ENCODE measurements at regions of chr1 and their contacts with region 1.

Region 1: GRCh38 chr1:26035959-26036755 is 9.8 kb downstream of the SLC30A2 start:
- DNase-seq: no peak
- H3K4me3 ChIP-seq: peak overlapping the region; percentile 79
- CTCF ChIP-seq: peak; percentile 97

Region 2: GRCh38 chr1:25523542-25523941 is 512.6 kb before region 1 on chr1:
- CTCF ChIA-PET with region 1: no interaction called
- POLR2A ChIA-PET with region 1: no interaction called
- DNase-seq: no peak
- H3K4me3 ChIP-seq: no peak overlapping the region
- CTCF ChIP-seq: no peak

Region 3: GRCh38 chr1:25631750-25632485 is 404.2 kb before region 1 on chr1:
- CTCF ChIA-PET with region 1: no interaction called
- POLR2A ChIA-PET with region 1: no interaction called
- DNase-seq: no peak
- H3K4me3 ChIP-seq: no peak overlapping the region
- CTCF ChIP-seq: no peak

Region 4: DNA sequence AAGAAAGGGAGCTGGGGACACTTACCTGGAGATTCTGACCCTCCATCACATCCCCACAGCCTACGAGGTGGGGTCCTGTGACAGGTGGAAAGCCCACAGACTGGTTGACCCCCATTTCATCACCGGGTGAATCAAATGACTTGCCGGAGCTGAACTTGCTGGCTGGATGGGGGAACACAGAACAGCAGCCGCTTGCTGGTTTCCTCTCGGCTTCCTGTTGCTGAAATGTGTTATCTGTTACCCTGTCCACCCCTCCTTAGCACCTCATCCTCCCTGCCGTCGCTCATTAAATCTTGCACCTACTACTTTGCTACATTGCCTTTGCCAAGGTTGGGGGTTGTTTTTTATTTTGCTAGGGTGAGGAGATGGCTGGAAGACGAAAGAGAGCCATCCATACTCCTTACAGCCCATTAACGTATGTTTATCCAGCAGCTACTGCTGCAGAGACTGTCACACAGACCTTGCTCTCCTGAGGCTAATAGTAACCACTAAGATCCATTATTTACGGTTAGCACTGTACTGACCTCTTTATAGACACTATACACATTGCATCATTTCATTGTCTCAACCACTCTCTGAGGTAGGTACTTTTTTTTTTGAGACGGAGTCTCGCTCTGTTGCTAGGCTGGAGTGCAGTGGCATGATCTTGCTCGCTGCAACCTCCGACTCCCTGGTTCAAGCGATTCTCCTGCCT is 45.3 kb before region 1 on chr1:
- CTCF ChIA-PET with region 1: no interaction called
- POLR2A ChIA-PET with region 1: no interaction called
- DNase-seq: no peak
- H3K4me3 ChIP-seq: no peak overlapping the region
- CTCF ChIP-seq: no peak

Region 5: DNA sequence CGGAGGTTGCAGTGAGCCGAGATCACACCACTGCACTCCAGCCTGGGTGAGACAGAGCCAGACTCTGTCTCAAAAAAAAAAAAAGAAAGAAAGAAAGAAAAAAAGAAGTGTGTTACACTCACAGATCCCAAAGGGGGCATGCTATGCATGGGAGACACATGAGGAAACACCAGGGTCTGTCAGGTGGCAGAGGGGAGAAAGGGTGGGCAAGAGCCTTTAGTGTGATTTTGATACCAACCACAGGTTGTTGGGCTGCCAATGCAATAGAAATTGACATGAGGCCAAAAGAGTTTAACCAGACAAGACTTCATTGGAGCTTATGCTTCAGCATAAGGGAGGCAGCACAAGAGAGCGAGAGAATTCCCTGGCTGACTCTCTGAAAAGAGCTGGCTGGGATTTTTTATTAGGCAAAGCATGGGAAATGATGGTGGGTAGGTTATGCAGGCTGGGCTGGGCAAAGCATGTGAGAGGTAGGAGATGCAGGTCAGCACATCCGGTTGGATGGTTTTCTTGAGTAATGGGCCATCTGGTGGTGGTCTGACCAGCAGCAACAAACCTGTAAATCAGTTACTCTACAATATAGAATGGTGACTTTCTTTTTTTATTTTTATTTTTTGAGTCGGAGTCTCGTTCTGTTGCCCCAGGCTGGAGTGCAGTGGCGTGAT is 26.2 kb before region 1 on chr1:
- CTCF ChIA-PET with region 1: no interaction called
- POLR2A ChIA-PET with region 1: no interaction called
- DNase-seq: no peak
- H3K4me3 ChIP-seq: no peak overlapping the region
- CTCF ChIP-seq: peak; percentile 11

Region 6: DNA sequence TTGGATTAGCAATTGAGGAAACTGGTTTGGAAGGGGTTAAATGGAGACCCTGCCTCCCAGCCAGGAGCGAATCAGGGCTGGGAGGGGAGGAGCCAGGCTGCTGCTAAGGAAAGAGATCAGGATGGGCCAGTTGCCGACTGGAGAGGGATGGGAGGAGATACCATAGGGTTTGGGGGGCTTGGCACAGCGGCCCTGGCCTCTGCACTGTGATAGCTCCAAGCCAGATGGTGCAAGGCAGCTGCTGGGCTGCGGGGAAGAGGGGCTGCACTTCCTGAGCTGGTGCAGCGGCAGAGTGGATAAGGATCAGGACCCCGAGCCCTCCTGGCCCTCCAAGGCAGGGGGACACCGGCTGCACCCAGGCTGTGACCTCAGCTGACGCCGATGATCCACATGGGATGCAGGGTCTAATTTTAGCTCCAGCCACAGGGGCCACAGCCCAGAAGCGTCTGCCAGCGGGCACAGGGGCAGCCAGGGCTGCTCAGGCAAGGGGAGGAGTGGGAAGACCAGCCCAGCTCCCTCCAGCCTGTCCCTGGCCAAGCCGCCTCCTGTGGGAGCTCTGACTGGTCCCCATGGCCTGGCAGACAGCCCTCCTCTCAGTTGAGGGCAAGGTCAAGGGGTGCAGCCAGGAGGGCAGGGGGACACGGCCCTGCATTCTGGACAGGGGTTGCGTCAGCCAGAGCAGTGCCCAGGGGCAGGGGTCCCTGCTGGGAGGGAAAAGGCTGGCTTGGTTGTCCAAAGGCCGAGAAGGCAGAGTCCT is 14.3 kb before region 1 on chr1 and contains the start of gene EXTL1:
- CTCF ChIA-PET with region 1: interaction called, 69 read pairs
- POLR2A ChIA-PET with region 1: no interaction called
- DNase-seq: no peak
- H3K4me3 ChIP-seq: peak within 1 kb of the TSS; percentile 65
- CTCF ChIP-seq: no peak

Region 7: DNA sequence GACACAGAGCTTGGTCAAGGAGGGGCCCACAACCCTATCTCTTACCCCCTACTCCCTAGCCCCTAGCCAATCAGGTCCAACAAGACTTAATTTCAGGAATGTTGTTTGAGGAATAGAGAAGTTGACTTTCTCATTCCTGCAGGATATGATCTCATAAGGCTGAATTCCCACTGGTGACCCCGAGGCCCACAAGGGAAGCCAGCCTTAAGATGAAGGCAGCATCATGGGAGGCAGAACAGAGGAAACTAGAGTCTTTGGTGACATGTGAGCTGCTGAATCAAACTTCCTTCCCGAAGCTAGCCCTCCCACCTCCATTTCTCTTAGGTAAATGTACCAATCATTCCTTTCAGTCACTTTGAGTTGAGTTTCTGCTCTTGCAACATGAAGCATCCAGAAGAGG is 66.4 kb after region 1 on chr1:
- CTCF ChIA-PET with region 1: interaction called, 24 read pairs
- POLR2A ChIA-PET with region 1: no interaction called
- DNase-seq: no peak
- H3K4me3 ChIP-seq: no peak overlapping the region
- CTCF ChIP-seq: no peak

Region 8: GRCh38 chr1:26126321-26127084 is 90.3 kb after region 1 on chr1:
- CTCF ChIA-PET with region 1: interaction called, 12 read pairs
- POLR2A ChIA-PET with region 1: no interaction called
- DNase-seq: no peak
- H3K4me3 ChIP-seq: no peak overlapping the region
- CTCF ChIP-seq: no peak

Region 9: GRCh38 chr1:26161415-26162219 is 125.5 kb after region 1 on chr1:
- CTCF ChIA-PET with region 1: interaction called, 29 read pairs
- POLR2A ChIA-PET with region 1: no interaction called
- DNase-seq: no peak
- H3K4me3 ChIP-seq: peak overlapping the region; percentile 30
- CTCF ChIP-seq: peak; percentile 18

Region 10: GRCh38 chr1:26169669-26170471 is 133.7 kb after region 1 on chr1 and contains the start of gene ZNF593:
- CTCF ChIA-PET with region 1: interaction called, 29 read pairs
- POLR2A ChIA-PET with region 1: no interaction called
- DNase-seq: peak; percentile 19
- H3K4me3 ChIP-seq: peak within 1 kb of the TSS; percentile 93
- CTCF ChIP-seq: peak; percentile 100